ENCODE measurements at regions of chr3 and their contacts with region 1.

Region 1: DNA sequence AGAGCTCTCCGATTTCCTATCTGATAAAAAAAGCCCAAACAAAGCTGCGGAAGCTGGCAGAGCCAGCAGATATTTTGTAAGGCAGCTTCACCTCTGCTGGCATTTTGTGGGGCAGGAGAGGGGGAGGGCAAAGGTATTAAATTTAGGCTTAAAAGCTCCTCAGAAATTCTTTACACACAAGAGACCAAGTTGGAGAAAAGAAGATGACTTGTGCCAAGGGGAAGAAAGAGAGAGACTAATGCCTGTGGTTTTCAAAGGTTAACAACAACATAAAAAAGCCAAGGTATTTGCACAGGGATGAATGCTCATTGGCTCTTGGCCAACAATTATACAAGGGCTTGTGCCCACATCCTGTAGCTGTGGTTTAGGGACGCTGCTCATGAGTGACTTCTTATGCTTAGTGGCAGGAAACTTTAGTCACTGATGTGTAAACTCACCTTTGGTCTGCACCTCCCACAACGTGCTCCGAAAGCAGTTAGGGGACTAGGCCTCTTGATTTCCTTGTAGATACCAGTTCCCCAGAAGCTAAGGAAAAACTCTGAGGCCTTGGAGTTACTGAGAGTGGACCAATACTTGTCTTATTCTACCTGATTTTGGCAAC is 152.9 kb downstream of the TPRG1 start:
- DNase-seq: peak; percentile 15 to 96 (median 94)
- ATAC-seq: peak; percentile 98
- H3K4me3 ChIP-seq: peak overlapping the region; percentile 21
- H3K4me3 Mint-ChIP-seq: peak overlapping the region; percentile 72 to 87 (median 82)
- H3K27ac ChIP-seq: peak overlapping the region; percentile 51
- H3K27ac Mint-ChIP-seq: peak overlapping the region; percentile 86 to 100 (median 94)
- H3K4me1 ChIP-seq: peaks cover 33 to 46% of the 10 kb centered on the region in 2 donors
- H3K4me1 Mint-ChIP-seq: peaks cover 27 to 80% (median 73%) of the 10 kb centered on the region in 7 donors
- H3K27me3 ChIP-seq: no peaks in the 10 kb centered on the region
- H3K27me3 Mint-ChIP-seq: peaks cover 0 to 4% (median 0%) of the 10 kb centered on the region in 5 donors

Region 2: GRCh38 chr3:187802928-187803259 is 1521.7 kb before region 1 on chr3:
- CTCF ChIA-PET with region 1: no interaction called
- POLR2A ChIA-PET with region 1: no interaction called
- intact Hi-C with region 1: loop called in 1 of 2 experiments (anchors 2 kb)
- DNase-seq: peak in 1 of 9 donors; percentile 66
- ATAC-seq: peak; percentile 56
- H3K4me3 ChIP-seq: no peak overlapping the region
- H3K4me3 Mint-ChIP-seq: peak overlapping the region in 6 of 10 donors; percentile 14 to 69 (median 34)
- H3K27ac ChIP-seq: no peak overlapping the region
- H3K27ac Mint-ChIP-seq: peak overlapping the region in 1 of 9 donors; percentile 90
- H3K4me1 ChIP-seq: peaks cover 22 to 47% of the 10 kb centered on the region in 2 donors
- H3K4me1 Mint-ChIP-seq: peaks cover 23 to 93% (median 44%) of the 10 kb centered on the region in 7 donors
- H3K27me3 ChIP-seq: no peaks in the 10 kb centered on the region
- H3K27me3 Mint-ChIP-seq: no peaks in the 10 kb centered on the region

Region 3: DNA sequence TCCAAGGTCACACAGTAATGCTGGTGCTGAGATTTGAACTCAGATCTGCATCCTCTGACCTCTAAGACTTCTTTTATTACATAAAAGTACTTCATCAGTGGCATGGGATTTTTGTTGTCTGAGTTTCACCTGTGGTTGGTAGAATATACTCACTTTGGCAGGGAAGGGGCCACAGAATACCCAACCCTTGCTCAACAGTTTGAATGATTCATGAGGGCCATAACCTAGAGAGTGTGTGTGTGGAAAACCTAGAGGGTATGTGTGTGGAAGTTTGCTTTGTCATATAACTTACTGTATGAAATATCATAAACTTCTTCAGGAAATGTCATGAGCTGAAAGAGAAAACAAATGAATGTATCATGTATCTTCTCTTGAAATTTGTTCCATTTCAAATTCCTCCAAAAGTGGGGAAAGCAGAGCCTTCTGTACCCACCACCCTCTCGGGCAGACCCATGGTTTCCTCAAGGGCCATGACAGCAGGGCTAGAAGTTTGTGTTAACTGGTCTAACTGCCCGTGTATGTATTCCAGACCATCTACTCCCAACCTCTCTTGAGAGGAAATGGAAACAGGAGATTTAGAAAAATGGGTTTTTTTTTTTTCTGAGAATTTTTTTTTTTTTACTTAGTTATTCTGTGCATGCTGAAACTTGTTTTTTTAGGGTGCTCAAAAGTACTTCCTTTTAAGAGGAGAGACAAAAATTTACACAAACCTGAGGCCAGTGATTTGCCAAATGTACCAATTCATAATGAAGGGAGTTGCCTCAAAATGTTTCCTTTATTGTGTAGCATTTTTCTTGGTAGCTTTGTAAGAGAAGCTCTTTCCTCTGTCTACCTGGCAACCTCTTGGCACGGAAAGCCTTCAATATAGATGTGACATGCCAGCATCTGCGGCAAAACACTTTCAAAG is 25.9 kb before region 1 on chr3:
- CTCF ChIA-PET with region 1: no interaction called
- POLR2A ChIA-PET with region 1: interaction called, 4 read pairs
- intact Hi-C with region 1: loop called in 1 of 2 experiments (anchors 1 kb)
- DNase-seq: peak in 3 of 9 donors; percentile 13 to 30 (median 14)
- ATAC-seq: no peak
- H3K4me3 ChIP-seq: no peak overlapping the region
- H3K4me3 Mint-ChIP-seq: peak overlapping the region in 9 of 10 donors; percentile 6 to 71 (median 51)
- H3K27ac ChIP-seq: no peak overlapping the region
- H3K27ac Mint-ChIP-seq: peak overlapping the region; percentile 16 to 85 (median 63)
- H3K4me1 ChIP-seq: peaks cover 0 to 13% of the 10 kb centered on the region in 2 donors
- H3K4me1 Mint-ChIP-seq: peaks cover 19 to 87% (median 59%) of the 10 kb centered on the region in 7 donors
- H3K27me3 ChIP-seq: no peaks in the 10 kb centered on the region
- H3K27me3 Mint-ChIP-seq: no peaks in the 10 kb centered on the region

Region 4: DNA sequence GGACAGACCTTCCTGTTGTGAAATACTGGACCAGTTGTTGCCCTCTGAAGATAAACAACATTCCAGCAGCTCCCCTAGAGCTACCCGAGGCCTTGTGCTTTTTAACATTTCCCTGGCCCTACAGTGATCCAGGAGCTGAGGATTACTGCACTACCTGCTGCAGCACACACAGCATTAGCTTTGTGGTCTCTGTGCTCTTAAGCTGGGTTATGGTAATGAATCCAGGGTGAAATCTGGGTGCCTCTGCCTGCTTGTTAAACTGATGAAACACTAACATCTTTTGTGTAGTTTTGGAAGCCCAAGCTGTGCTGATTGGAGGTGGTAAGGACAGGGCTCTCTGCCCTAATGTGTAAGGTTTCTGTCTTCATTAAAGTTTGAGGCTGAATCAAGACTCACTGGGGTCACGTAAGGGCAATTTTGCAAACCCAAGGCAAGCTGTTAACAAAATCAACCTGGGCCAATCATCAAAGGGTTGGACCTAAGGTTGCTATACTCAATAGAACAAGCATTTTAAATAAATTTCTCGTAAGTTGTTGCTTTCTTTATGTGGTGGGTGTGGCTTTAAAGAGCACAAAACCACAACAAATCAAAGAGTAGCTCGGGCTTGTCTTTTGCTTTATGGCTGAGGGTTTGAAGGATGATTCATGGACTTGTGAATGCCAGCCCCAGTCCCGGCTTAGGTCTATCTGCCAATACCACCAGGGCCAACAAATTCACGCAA is 31.0 kb after region 1 on chr3:
- CTCF ChIA-PET with region 1: interaction called, 6 read pairs
- POLR2A ChIA-PET with region 1: interaction called, 20 read pairs
- intact Hi-C with region 1: loop called (anchors 1 kb)
- DNase-seq: peak in 8 of 9 donors; percentile 27 to 76 (median 62)
- ATAC-seq: peak; percentile 83
- H3K4me3 ChIP-seq: peak overlapping the region; percentile 27
- H3K4me3 Mint-ChIP-seq: peak overlapping the region; percentile 68 to 86 (median 78)
- H3K27ac ChIP-seq: peak overlapping the region; percentile 47
- H3K27ac Mint-ChIP-seq: peak overlapping the region; percentile 85 to 98 (median 92)
- H3K4me1 ChIP-seq: peaks cover 12 to 21% of the 10 kb centered on the region in 2 donors
- H3K4me1 Mint-ChIP-seq: peaks cover 11 to 43% (median 34%) of the 10 kb centered on the region in 7 donors
- H3K27me3 ChIP-seq: no peaks in the 10 kb centered on the region
- H3K27me3 Mint-ChIP-seq: no peaks in the 10 kb centered on the region

Region 5: DNA sequence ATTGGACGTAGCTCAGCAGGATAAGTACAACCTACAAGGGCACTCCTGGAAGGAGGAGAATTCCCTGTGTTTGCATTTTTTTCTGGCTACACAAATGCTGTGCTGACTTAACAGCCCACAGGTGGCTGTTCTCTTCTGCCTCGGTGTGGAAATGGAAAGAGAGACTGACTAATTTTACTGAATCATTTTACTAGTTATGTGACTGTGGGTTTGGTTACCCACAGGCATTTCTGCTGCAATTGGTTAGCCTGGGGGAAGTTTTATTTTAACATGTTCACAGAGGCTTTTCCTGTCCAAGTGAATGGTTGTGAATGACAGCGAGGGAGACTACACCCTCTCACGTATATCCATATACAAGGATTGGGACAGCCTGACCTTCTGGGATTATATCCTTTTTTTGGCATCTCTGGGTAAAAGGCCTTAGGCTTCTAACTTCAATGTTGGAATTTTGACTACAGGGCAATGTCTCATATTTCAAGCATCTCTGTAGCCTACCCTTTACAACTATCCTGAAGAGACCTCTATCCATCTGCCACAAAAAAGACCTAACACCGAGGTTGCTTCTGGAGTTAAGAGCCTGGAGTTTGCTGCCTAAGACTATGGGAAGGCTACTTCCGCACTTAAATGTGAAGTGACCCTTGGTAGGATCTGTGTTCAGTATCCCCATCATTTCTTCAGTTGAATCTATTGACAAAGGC is 239.4 kb after region 1 on chr3:
- CTCF ChIA-PET with region 1: no interaction called
- POLR2A ChIA-PET with region 1: no interaction called
- intact Hi-C with region 1: loop called in 1 of 2 experiments (anchors 1 kb)
- DNase-seq: peak in 1 of 9 donors; percentile 59
- ATAC-seq: no peak
- H3K4me3 ChIP-seq: no peak overlapping the region
- H3K4me3 Mint-ChIP-seq: peak overlapping the region in 1 of 10 donors; percentile 12
- H3K27ac ChIP-seq: no peak overlapping the region
- H3K27ac Mint-ChIP-seq: peak overlapping the region in 1 of 9 donors; percentile 35
- H3K4me1 ChIP-seq: no peaks in the 10 kb centered on the region
- H3K4me1 Mint-ChIP-seq: peaks cover 0 to 38% (median 2%) of the 10 kb centered on the region in 7 donors
- H3K27me3 ChIP-seq: no peaks in the 10 kb centered on the region
- H3K27me3 Mint-ChIP-seq: peaks cover 0 to 2% (median 0%) of the 10 kb centered on the region in 5 donors